ENCODE measurements at regions of chr3 and their contacts with region 1.

Region 1: DNA sequence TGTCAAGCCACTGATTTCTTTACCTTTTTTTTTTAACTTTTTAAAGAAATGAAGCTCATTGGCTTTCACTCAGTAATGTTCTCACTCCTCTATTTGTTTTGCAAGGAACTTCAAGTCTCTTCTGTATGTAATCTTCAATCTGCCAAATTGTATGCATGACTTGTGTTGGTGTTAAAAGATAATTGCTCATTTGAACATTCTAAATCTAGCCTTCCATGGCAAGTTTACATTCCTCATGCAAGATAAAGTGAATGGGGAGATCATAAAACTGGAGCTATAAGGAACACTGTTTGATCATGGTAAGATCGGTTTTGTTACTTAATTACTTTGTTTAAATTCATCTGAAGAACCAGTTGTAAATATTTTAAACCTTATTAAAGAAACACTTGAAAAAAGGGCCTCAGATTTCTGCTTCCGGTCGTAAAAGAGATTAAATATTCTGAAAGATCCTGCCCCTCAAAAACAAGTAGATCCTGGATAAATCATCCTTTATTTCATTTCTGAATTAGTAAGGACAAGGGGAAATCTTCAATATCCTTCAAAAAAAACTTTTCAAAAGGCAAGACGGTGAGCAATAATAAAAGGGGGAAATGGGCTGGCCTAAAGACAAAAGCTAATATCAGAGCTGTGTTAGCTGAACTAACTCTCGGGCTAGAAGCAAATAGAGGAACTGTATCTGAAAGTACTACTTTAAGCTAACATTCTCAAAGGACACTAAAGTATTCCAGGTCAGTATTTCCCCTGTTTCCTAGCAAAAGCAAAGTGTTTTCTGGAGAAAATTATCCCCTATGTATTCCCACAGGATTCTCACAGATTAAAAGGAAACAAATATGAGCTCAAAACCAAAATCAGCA is 107.0 kb upstream of the ATP11B start:
- DNase-seq: no peak
- H3K4me3 ChIP-seq: no peak overlapping the region
- H3K27ac ChIP-seq: no peak overlapping the region
- H3K4me1 ChIP-seq: peaks cover 0 to 16% (median 13%) of the 10 kb centered on the region in 4 donors
- H3K27me3 ChIP-seq: peaks cover 0 to 46% of the 10 kb centered on the region in 2 donors
- CTCF ChIP-seq: no peak

Region 2: DNA sequence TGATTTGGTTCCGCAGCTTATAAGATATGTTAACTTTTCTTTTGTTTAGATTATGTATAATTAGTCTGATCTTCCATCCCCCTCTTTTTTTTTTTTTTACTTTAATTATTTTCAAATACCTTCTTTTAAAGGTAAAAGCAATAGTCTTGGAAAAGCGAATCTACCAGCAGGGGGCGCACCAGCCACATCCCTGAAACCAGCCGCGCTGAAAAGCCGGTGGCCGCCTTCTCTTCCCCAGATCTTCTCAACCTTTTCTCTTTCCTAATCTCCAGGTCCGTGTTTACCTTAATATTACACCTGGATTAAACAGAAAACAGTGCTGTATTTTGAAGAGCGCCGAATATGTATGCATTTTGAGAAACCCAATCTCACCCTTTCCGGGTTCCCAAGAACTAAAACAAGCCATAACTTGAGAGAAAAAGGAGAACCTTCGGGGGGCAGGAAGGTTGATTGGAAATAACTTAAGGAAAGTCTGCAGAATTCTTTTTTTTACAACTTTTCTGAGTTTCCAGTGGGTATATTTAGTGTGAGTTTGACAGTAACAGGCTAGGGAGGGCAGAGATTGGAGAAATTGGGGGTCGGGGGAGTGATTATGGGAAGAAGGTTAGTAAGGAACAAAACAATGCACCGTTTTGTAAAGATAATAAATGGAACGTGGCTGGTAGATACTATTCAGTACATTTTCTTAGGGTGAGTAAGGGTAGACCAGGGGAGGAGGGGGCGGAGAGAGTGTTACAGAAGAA is 976.6 kb before region 1 on chr3:
- intact Hi-C with region 1: loop called (anchors 5 kb)
- DNase-seq: peak in 1 of 2 donors; percentile 44
- H3K4me3 ChIP-seq: no peak overlapping the region
- H3K27ac ChIP-seq: no peak overlapping the region
- H3K4me1 ChIP-seq: peaks cover 0 to 36% (median 21%) of the 10 kb centered on the region in 4 donors
- H3K27me3 ChIP-seq: peaks cover 10 to 100% of the 10 kb centered on the region in 2 donors
- CTCF ChIP-seq: peak; percentile 54 to 77

Region 3: DNA sequence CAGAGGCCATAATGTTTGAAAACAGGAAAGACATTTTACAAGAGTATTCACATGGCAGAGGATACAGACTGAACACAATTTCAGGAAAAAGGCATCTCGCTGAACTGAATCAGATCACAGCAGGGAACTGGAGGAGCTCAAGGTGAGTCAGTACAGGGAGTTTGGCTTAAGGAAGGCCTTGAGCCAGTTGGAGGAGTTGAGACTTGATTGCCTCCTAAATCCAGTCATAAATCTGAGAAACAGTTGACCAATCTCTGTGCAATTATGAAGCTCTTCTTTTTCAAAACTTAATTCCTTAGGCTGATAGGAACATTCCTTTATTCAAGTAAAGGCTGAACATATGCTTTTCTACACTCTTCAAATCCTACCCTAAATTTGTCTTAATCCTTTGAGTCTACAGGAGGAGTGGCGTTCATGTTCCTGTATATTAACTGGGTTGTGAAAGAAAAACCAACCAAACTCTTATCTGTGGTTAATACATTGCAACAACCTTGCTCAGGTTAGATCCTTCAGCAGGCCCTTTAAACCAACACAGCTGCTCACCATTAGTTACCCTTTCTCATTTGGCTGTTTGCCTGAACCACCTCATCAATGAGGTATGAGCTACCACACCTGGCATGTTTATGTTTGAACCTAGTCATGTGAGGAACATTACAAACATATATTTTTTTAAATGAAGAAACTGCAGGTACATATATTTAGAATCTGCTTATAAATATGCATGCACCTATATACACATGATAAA is 297.0 kb before region 1 on chr3:
- intact Hi-C with region 1: no loop called
- DNase-seq: no peak
- H3K4me3 ChIP-seq: no peak overlapping the region
- H3K27ac ChIP-seq: no peak overlapping the region
- H3K4me1 ChIP-seq: no peaks in the 10 kb centered on the region
- H3K27me3 ChIP-seq: no peaks in the 10 kb centered on the region
- CTCF ChIP-seq: no peak

Measured in tibial artery (tissue), 4 donors.